ENCODE measurements at regions of chr11 and their contacts with region 1.

Region 1: GRCh38 chr11:118610804-118611795 is 3.7 kb downstream of the PHLDB1 start:
- DNase-seq: peak; percentile 60 to 98
- H3K4me3 ChIP-seq: peak overlapping the region; percentile 14 to 66 (median 48); a peak in 7 of 8 replicates
- H3K27ac ChIP-seq: no peak overlapping the region
- H3K4me1 ChIP-seq: peaks cover 24 to 59% (median 34%) of the 10 kb centered on the region in 4 experiments
- H3K27me3 ChIP-seq: peaks cover 42 to 55% (median 50%) of the 10 kb centered on the region in 4 experiments
- CTCF ChIP-seq: peak; percentile 91 to 96 (median 91)
- EP300 ChIP-seq: no peak
- POLR2A ChIP-seq: no peak
- RAD21 ChIP-seq: peak; percentile 67 to 79; a peak in 3 of 4 replicates

Region 2: DNA sequence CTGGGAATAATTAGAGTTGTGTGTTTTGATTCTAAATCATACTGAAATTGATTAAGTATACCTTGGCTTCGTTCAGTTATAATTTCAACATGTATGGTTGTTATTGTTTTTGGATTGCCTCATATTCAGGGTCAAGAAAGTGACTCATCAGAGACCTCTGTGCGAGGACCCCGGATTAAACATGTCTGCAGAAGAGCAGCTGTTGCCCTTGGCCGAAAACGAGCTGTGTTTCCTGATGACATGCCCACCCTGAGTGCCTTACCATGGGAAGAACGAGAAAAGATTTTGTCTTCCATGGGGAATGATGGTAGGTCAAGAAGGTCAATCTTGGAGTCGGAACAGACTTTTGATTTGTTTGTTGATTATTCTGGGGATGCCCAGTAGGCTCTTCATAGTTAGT is 134.4 kb before region 1 on chr11:
- CTCF ChIA-PET with region 1: no interaction called
- POLR2A ChIA-PET with region 1: no interaction called
- DNase-seq: no peak
- H3K4me3 ChIP-seq: no peak overlapping the region
- H3K27ac ChIP-seq: no peak overlapping the region
- H3K4me1 ChIP-seq: no peaks in the 10 kb centered on the region
- H3K27me3 ChIP-seq: no peaks in the 10 kb centered on the region
- CTCF ChIP-seq: no peak
- EP300 ChIP-seq: no peak
- POLR2A ChIP-seq: no peak
- RAD21 ChIP-seq: no peak

Region 3: GRCh38 chr11:118592616-118593367 is 18.3 kb before region 1 on chr11:
- CTCF ChIA-PET with region 1: interaction called, 86 read pairs
- POLR2A ChIA-PET with region 1: interaction called, 5 read pairs
- DNase-seq: no peak
- H3K4me3 ChIP-seq: no peak overlapping the region
- H3K27ac ChIP-seq: no peak overlapping the region
- H3K4me1 ChIP-seq: no peaks in the 10 kb centered on the region
- H3K27me3 ChIP-seq: no peaks in the 10 kb centered on the region
- CTCF ChIP-seq: no peak
- EP300 ChIP-seq: no peak
- POLR2A ChIP-seq: no peak
- RAD21 ChIP-seq: no peak

Region 4: GRCh38 chr11:118634431-118635236 is 23.5 kb after region 1 on chr11:
- CTCF ChIA-PET with region 1: interaction called, 435 read pairs
- POLR2A ChIA-PET with region 1: interaction called, 574 read pairs
- DNase-seq: peak; percentile 80 to 89
- H3K4me3 ChIP-seq: peak overlapping the region; percentile 36 to 72 (median 62)
- H3K27ac ChIP-seq: peak overlapping the region; percentile 89
- H3K4me1 ChIP-seq: peaks cover 16 to 23% (median 19%) of the 10 kb centered on the region in 4 experiments
- H3K27me3 ChIP-seq: no peaks in the 10 kb centered on the region
- CTCF ChIP-seq: peak in 2 of 3 experiments; percentile 34 to 59; a peak in 3 of 4 replicates
- EP300 ChIP-seq: no peak
- POLR2A ChIP-seq: peak; percentile 50 to 76
- RAD21 ChIP-seq: 0 out of 4 replicates have a peak, but pooled peaks of 1 of the 2 experiments have one; percentile 8

Region 5: DNA sequence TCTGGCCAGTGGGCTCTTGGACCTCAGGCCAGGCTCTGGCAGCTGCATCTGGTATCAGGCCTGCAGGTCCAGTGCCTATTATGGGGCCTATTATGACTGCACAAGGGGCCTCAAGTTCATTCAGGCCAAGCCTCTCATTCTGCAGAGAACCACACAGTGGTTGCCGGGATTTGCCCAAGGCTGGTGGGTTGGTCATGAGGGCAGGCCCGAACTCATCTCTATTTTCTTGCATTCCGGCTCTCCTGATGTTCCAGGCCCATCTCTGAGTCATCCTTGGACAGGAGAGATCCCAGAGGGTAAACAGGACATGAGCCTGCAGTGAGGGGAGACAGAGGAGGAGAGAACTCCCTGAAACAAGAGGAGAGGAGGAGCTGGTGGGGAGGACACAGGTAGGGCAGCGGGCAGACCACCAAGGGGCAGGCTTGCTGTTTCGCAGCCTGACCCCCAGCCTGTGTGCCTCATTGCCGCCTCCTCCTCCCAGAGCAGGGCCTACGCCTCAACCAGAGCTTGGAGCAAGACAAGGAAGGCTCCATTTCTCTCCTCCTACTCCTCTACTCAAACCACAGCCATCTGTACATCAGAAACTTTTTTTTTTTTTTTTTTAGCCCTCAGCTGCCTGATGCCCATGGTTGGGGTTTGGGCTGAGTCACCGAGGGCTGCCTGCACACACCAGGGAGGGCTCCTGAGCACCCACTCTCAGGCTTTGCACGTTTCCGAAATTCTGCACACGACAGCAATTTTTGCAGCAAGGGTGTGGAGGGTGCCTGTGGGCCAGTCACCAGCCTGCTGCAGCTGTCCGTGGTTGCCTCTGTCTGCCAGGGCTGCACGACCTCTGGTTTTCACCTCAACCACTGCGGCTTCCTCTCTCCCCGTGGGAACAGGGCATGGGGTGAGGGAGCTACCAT is 81.1 kb after region 1 on chr11:
- CTCF ChIA-PET with region 1: no interaction called
- POLR2A ChIA-PET with region 1: no interaction called
- DNase-seq: no peak
- H3K4me3 ChIP-seq: no peak overlapping the region
- H3K27ac ChIP-seq: no peak overlapping the region
- H3K4me1 ChIP-seq: peaks cover 0 to 24% (median 17%) of the 10 kb centered on the region in 4 experiments; a peak in 6 of 7 replicates
- H3K27me3 ChIP-seq: no peaks in the 10 kb centered on the region
- CTCF ChIP-seq: peak; percentile 27 to 42 (median 36); a peak in 3 of 4 replicates
- EP300 ChIP-seq: no peak
- POLR2A ChIP-seq: no peak
- RAD21 ChIP-seq: peak; percentile 33 to 53

Region 6: DNA sequence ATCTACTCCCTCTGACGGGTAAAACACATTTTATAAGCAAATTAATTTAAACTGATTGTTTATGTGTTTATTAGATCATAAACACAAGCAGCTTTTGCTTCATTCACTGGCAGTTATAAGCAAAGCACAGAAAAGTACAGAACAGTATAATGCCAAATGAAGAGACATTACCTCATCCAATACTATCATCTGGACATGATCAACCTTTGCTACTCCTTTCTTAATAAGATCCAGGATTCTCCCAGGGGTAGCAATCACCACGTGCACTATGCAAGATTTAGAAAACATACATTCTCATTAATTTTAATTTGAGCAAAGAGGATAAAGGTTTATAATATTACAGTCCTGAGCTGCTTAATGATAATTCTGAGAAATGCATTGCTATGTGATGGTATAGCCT is 151.9 kb after region 1 on chr11:
- CTCF ChIA-PET with region 1: no interaction called
- POLR2A ChIA-PET with region 1: no interaction called
- DNase-seq: no peak
- H3K4me3 ChIP-seq: no peak overlapping the region
- H3K27ac ChIP-seq: no peak overlapping the region
- H3K4me1 ChIP-seq: no peaks in the 10 kb centered on the region
- H3K27me3 ChIP-seq: no peaks in the 10 kb centered on the region
- CTCF ChIP-seq: no peak
- EP300 ChIP-seq: no peak
- POLR2A ChIP-seq: no peak
- RAD21 ChIP-seq: no peak

Measured in H1 (cell line).